PC-9 (cell line): ENCODE measurements at regions of chr1 and their contacts with region 1.

Region 1: GRCh38 chr1:164558461-164559341 is at the start of gene PBX1:
- DNase-seq: peak; percentile 94 to 96
- H3K4me3 ChIP-seq: peak within 1 kb of the TSS; percentile 71
- H3K27ac ChIP-seq: peak within 1 kb of the TSS; percentile 74
- H3K4me1 ChIP-seq: peaks cover 40% of the 10 kb centered on the region
- H3K27me3 ChIP-seq: no peaks in the 10 kb centered on the region
- CTCF ChIP-seq: no peak
- total RNA-seq, gene PBX1: 44.5 and 57.7 TPM in 2 replicates

Region 2: DNA sequence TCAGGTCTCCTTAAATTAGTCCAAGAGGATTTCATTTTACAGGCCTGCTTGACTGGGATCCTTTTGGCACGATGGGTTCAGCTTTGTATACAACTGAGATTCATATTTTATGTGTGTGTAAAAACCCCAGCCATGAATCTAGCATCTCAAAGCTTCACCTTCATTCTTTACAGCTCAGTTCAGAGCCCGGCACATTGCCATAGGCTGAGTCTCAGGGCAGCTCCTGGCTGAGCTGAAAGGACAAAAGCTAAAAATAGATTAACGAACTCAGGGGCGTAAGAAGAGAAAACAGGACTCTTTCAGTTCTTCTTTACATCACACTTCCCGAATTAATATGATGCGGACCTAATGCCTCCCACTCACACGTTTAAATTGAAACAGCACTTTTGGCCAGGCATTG is 262.5 kb before region 1 on chr1:
- CTCF ChIA-PET with region 1: no interaction called
- POLR2A ChIA-PET with region 1: interaction called, 10 read pairs
- intact Hi-C with region 1: no loop called
- DNase-seq: no peak
- H3K4me3 ChIP-seq: no peak overlapping the region
- H3K27ac ChIP-seq: no peak overlapping the region
- H3K4me1 ChIP-seq: no peaks in the 10 kb centered on the region
- H3K27me3 ChIP-seq: no peaks in the 10 kb centered on the region
- CTCF ChIP-seq: no peak

Region 3: GRCh38 chr1:164495905-164496304 is 62.8 kb before region 1 on chr1:
- CTCF ChIA-PET with region 1: no interaction called
- POLR2A ChIA-PET with region 1: no interaction called
- intact Hi-C with region 1: no loop called
- DNase-seq: no peak
- H3K4me3 ChIP-seq: no peak overlapping the region
- H3K27ac ChIP-seq: no peak overlapping the region
- H3K4me1 ChIP-seq: no peaks in the 10 kb centered on the region
- H3K27me3 ChIP-seq: no peaks in the 10 kb centered on the region
- CTCF ChIP-seq: no peak

Region 4: GRCh38 chr1:164576291-164577271 is 17.9 kb after region 1 on chr1:
- CTCF ChIA-PET with region 1: no interaction called
- POLR2A ChIA-PET with region 1: no interaction called
- intact Hi-C with region 1: no loop called
- DNase-seq: no peak
- H3K4me3 ChIP-seq: no peak overlapping the region
- H3K27ac ChIP-seq: no peak overlapping the region
- H3K4me1 ChIP-seq: no peaks in the 10 kb centered on the region
- H3K27me3 ChIP-seq: no peaks in the 10 kb centered on the region
- CTCF ChIP-seq: no peak

Region 5: DNA sequence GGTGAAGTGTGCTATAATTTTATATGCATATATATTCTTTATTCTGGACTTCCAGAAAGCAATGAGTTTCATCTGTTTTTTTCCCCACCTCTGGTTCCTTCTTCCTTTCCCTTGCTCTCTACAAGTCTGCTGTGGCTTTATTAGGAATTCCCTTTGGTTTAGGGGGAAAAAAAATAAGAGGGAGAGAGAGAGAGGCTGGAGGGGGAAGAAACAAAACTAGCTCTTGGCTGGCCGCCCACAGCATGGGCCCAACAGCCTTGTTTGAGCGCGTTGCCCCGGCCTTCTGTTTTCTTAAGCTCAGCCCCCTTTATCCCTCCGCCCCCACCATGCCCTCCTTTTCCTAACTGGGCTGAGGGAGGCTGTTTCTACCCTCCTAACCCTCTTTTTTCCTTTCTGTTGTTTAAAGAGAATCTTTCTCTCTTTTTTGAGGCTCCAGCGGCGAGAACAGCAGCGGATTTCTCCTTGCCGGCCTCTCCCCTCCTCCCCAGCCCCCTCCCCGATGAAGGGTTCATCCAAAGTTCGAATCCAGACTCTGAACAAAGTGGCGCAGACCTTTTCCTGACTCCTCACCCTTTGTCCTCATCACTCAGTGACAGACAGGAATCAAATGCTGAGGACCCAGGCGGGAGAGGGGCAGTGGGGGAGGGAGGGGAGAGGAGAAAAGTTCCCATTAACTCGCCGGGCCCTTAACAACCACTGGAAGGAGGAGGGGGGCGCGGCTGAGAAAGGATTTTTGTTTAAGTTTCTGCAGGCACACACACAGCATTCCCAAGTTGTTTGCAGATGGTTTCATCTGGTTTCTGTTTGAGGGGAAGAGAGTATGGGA is 30.0 kb after region 1 on chr1:
- CTCF ChIA-PET with region 1: interaction called, 14 read pairs
- POLR2A ChIA-PET with region 1: interaction called, 3 read pairs
- intact Hi-C with region 1: no loop called
- DNase-seq: no peak
- H3K4me3 ChIP-seq: no peak overlapping the region
- H3K27ac ChIP-seq: no peak overlapping the region
- H3K4me1 ChIP-seq: peaks cover 38% of the 10 kb centered on the region
- H3K27me3 ChIP-seq: no peaks in the 10 kb centered on the region
- CTCF ChIP-seq: no peak

Region 6: GRCh38 chr1:164611754-164612642 is 53.3 kb after region 1 on chr1:
- CTCF ChIA-PET with region 1: interaction called, 3 read pairs
- POLR2A ChIA-PET with region 1: interaction called, 11 read pairs
- intact Hi-C with region 1: loop called (anchors 2 kb)
- DNase-seq: peak; percentile 79 to 96
- H3K4me3 ChIP-seq: no peak overlapping the region; the same call in 1 of the 2 replicates
- H3K27ac ChIP-seq: peak overlapping the region; percentile 79
- H3K4me1 ChIP-seq: peaks cover 44% of the 10 kb centered on the region
- H3K27me3 ChIP-seq: no peaks in the 10 kb centered on the region
- CTCF ChIP-seq: no peak

Region 7: GRCh38 chr1:164637461-164638375 is 79.0 kb after region 1 on chr1:
- CTCF ChIA-PET with region 1: no interaction called
- POLR2A ChIA-PET with region 1: no interaction called
- intact Hi-C with region 1: loop called (anchors 5 kb)
- DNase-seq: peak; percentile 73 to 92
- H3K4me3 ChIP-seq: no peak overlapping the region
- H3K27ac ChIP-seq: peak overlapping the region; percentile 86
- H3K4me1 ChIP-seq: peaks cover 61% of the 10 kb centered on the region
- H3K27me3 ChIP-seq: no peaks in the 10 kb centered on the region
- CTCF ChIP-seq: no peak

Region 8: GRCh38 chr1:164748253-164748899 is 189.7 kb after region 1 on chr1:
- CTCF ChIA-PET with region 1: no interaction called
- POLR2A ChIA-PET with region 1: interaction called, 15 read pairs
- intact Hi-C with region 1: no loop called
- DNase-seq: peak; percentile 46 to 97
- H3K4me3 ChIP-seq: peak overlapping the region; percentile 9; the same call in 1 of the 2 replicates
- H3K27ac ChIP-seq: peak overlapping the region; percentile 92
- H3K4me1 ChIP-seq: peaks cover 69% of the 10 kb centered on the region
- H3K27me3 ChIP-seq: no peaks in the 10 kb centered on the region
- CTCF ChIP-seq: no peak

Region 9: DNA sequence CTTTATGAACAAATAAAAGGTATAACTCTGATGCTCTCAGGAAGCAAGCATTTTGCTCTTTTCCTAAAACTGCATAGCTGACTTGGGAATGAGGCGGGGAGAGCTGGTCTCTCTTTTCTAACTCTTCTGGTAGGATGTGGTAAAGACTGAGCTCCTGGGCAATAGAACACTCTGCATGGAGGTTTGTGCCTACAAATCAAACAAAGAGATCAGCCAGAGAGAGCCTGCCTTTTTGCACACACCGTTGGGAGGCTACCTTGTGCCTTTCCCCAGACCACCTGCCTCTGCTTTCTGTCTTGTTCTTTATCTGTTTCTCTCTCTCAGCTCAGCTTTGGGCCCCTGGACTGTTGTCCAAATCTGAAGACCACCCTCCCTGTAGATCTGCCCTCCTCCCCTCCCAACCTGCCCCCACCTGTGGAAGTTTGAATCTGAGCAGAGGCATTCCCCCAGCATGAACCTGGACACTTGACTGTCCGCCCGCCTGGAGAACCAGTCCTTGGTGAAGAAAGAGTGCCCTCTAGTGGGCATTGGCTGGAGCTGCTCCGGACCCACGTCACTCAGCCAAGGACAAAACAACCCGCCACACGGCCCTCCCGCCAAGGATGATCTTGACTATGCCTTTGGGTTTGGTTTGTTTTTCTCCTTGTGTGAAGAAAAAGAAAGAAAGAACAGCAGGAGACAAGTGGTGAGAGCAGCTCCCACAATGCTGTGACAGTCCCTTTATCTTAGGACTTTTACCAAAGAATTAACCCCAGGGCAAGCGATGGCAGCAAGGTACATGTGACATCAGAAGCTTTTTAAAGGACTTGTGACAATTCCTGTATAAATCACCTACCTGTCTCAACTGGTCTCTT is 228.5 kb after region 1 on chr1:
- CTCF ChIA-PET with region 1: no interaction called
- POLR2A ChIA-PET with region 1: no interaction called
- intact Hi-C with region 1: loop called (anchors 5 kb)
- DNase-seq: peak; percentile 66 to 78
- H3K4me3 ChIP-seq: no peak overlapping the region
- H3K27ac ChIP-seq: peak overlapping the region; percentile 54
- H3K4me1 ChIP-seq: peaks cover 22% of the 10 kb centered on the region
- H3K27me3 ChIP-seq: no peaks in the 10 kb centered on the region
- CTCF ChIP-seq: peak; percentile 95